ENCODE measurements at regions of chr6 and their contacts with region 1.

Region 1: GRCh38 chr6:5484692-5485091 is 223.4 kb downstream of the FARS2 start:
- DNase-seq: no peak
- ATAC-seq: no peak
- H3K4me3 ChIP-seq: no peak overlapping the region
- H3K27ac ChIP-seq: no peak overlapping the region
- H3K4me1 ChIP-seq: no peaks in the 10 kb centered on the region
- CTCF ChIP-seq: no peak
- EP300 ChIP-seq: no peak
- POLR2A ChIP-seq: no peak
- RAD21 ChIP-seq: no peak

Region 2: GRCh38 chr6:5471044-5471443 is 13.6 kb before region 1 on chr6:
- CTCF ChIA-PET with region 1: interaction called, 13 read pairs
- POLR2A ChIA-PET with region 1: no interaction called
- DNase-seq: peak; percentile 31 to 49
- ATAC-seq: peak; percentile 85 to 90
- H3K4me3 ChIP-seq: no peak overlapping the region
- H3K27ac ChIP-seq: no peak overlapping the region
- H3K4me1 ChIP-seq: peaks cover 6% of the 10 kb centered on the region; the same call in 1 of the 3 replicates
- CTCF ChIP-seq: peak; percentile 75
- EP300 ChIP-seq: no peak
- POLR2A ChIP-seq: no peak
- RAD21 ChIP-seq: peak; percentile 72 to 76